Gastrocnemius medialis (tissue), 4 donors: ENCODE measurements at regions of chr15 and their contacts with region 1.

Region 1: GRCh38 chr15:67080900-67081431 is 15.6 kb downstream of the SMAD3 start:
- DNase-seq: peak; percentile 92 to 94
- ATAC-seq: peak; percentile 73 to 82
- H3K4me3 ChIP-seq: peak overlapping the region in 2 of 4 donors; percentile 8 to 9
- H3K27ac ChIP-seq: peak overlapping the region; percentile 87 to 98 (median 94)
- H3K4me1 ChIP-seq: peaks cover 93% of the 10 kb centered on the region in 2 donors
- H3K27me3 ChIP-seq: no peaks in the 10 kb centered on the region
- CTCF ChIP-seq: peak in 4 of 5 experiments; percentile 17 to 37 (median 22)
- POLR2A ChIP-seq: peak; percentile 52 to 63

Region 2: DNA sequence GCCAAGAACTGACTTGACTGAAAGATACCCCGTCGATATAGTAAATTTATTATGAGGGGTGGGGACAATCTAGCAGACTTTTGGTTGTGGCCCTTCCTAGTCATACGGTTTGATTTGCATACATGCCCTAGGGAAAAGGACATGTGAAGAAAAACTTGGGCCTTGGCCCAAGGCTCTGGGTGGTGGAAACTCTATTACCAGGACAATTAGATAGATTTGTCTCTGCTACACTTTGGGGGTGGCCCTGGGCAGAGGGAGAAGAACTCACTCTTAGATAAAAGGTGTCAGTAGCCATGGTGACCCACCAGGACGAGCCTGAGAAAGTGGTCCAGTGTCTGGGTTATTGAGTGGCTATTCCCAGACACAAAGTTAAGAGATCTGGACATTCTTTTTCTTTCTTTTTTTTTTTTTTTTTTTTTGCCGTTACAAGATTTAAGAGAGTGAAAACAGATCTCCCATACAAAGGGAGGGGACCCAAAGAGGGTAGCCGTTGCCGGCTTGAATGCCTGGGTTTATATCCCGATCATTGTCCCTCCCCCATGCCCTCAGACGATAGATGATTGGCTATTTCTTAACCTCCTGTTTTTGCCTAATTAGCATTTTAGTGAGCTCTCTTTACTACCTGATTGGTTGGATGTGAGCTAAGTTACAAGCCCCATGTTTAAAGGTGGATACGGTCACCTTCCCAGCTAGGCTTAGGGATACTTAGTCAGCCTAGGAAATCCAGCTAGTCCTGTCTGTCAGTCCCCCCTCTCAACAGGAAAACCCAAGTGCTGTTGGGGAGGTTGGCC is 112.0 kb before region 1 on chr15:
- in situ Hi-C with region 1: no loop called
- intact Hi-C with region 1: no loop called
- DNase-seq: no peak
- ATAC-seq: no peak
- H3K4me3 ChIP-seq: no peak overlapping the region
- H3K27ac ChIP-seq: no peak overlapping the region
- H3K4me1 ChIP-seq: no peaks in the 10 kb centered on the region
- H3K27me3 ChIP-seq: no peaks in the 10 kb centered on the region
- CTCF ChIP-seq: no peak
- POLR2A ChIP-seq: no peak

Region 3: DNA sequence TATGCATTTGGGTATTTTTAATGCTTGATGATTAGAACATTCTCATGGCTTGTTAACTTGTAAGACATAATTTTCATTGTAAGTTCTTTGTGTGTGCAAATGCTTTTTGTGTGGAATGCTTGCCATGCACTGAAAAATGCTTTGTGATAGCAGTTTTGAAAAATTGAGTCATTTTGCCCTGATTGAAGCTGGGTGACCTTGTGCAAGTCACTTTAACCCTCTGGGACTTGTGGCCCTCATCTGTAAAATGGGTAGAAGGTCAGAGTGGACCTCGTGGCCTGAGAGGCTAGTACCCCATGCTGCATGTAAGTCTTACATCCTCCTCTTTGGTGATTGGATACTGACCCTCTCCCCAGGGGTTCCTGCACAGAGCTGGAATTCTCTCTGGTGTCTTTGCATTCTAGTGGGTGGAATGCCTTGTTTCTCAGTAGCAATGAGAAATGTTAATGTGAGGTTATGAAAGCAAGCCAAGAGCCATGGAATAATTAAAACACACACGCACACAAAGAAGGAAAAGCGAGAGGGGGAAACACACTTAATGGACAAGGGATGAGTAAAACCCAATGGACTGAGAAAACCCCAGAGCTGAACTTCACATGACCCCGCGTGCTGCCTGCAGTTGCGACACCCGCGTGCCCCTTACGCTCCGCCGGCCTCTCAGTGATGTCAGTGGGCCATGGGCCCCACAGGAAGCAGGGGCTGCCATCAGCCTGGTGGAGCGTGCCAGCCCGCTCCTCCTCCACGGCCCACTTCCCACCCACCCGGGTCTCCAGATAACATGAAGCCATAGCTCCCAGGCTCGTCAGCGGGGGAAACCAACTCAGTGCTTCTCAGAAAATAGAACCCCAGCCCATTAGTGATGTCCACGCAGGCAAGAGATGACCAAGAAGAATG is 28.4 kb after region 1 on chr15:
- in situ Hi-C with region 1: no loop called
- intact Hi-C with region 1: loop called (anchors 2 kb)
- DNase-seq: peak; percentile 54 to 62
- ATAC-seq: no peak
- H3K4me3 ChIP-seq: no peak overlapping the region
- H3K27ac ChIP-seq: peak overlapping the region; percentile 61 to 93 (median 66)
- H3K4me1 ChIP-seq: peaks cover 75 to 87% of the 10 kb centered on the region in 2 donors
- H3K27me3 ChIP-seq: no peaks in the 10 kb centered on the region
- CTCF ChIP-seq: no peak
- POLR2A ChIP-seq: no peak

Region 4: DNA sequence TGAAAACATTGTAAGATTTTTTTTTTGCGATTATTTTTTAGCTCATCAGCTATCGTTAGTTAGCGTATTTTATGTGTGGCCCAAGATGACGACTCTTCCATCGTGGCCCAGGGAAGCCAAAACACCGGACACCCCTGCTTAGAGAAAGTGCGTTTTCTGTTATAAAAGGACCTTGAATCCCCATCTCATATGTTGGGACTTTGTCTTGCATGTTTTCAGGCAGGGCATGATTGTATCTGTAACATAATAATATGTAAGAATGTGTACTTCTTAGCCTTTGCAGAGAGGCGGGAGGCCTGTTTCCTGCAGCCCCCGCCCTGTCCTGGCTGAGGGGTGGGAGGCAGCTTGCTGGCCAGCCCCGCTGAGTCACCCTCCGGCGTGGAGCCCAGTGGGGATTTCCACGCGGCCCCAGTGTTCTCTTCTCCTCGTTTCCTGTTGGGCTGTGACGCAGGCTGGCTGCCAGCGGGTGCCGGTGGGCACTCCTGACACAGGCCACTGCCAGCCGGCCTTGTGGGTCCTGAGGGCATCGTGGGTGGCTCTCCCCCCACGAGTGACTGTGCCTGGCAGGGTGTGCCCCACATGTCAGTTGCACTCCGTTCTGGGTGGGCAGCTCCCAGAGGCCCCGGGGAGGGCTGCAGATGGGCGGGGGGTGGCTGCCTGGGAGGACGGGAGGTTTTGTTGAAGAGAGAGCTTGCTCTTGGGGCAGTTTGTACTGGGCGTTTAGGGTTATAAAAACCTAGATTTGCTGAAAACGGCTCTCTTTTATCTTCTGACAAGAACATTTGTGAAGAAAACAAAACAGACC is 40.1 kb after region 1 on chr15:
- in situ Hi-C with region 1: loop called in 1 of 4 experiments (anchors 10 kb)
- intact Hi-C with region 1: loop called (anchors 1 kb)
- DNase-seq: peak; percentile 79 to 85
- ATAC-seq: peak; percentile 15 to 20
- H3K4me3 ChIP-seq: peak overlapping the region; percentile 7 to 26 (median 24)
- H3K27ac ChIP-seq: peak overlapping the region; percentile 92 to 98 (median 94)
- H3K4me1 ChIP-seq: peaks cover 92% of the 10 kb centered on the region in 2 donors
- H3K27me3 ChIP-seq: no peaks in the 10 kb centered on the region
- CTCF ChIP-seq: no peak
- POLR2A ChIP-seq: peak; percentile 9 to 47

Region 5: DNA sequence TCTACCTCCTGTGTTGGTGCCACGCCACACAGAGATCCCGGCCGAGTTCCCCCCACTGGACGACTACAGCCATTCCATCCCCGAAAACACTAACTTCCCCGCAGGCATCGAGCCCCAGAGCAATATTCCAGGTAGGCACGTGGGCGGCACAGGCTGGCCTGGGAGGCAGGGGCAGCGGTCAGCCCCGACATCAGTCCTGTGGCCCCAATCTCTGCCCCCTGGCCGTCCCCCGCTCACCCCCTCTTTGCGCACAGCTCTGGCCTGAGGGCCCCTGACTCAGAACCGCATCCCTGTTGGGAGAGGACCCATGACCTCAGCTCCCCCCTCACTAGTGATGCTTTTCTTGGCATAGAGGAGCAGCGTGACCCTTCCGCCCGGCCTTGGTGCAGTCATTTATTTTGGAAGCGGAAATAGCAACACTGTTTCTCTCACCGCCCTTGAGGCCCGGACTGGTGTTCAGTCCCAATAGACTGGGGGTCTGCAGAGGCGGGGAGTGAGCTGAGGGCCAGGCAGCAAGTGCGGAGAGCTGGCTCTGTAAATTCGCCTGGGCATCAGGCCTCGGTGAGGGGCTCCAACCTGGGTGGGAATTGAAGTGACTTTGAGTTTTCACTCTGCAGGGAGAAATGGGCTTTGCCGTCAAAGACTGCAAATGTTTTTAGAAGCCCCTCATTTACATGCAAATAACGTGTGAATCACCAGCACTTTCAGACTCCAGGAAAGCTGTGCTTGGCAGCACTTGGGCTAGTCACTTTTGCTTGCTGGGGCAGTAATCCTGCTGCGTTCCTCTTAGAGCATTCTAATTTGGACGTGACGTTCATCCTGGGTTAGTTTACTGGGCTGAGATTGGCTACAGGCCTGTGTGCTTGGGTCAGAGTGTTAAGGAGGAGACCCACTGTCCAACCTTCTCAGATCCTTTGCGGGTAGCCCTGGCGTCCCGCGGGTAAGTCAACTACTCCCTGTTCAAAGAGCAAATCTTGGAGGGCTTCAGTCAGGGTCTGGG is 84.6 kb after region 1 on chr15:
- in situ Hi-C with region 1: no loop called
- intact Hi-C with region 1: loop called (anchors 1 kb)
- DNase-seq: peak in 1 of 2 donors; percentile 43
- ATAC-seq: no peak
- H3K4me3 ChIP-seq: no peak overlapping the region
- H3K27ac ChIP-seq: peak overlapping the region; percentile 85 to 99 (median 95)
- H3K4me1 ChIP-seq: peaks cover 89 to 91% of the 10 kb centered on the region in 2 donors
- H3K27me3 ChIP-seq: no peaks in the 10 kb centered on the region
- CTCF ChIP-seq: no peak
- POLR2A ChIP-seq: no peak

Region 6: GRCh38 chr15:67188551-67189218 is 107.7 kb after region 1 on chr15:
- in situ Hi-C with region 1: loop called in 2 of 4 experiments (anchors 5 to 10 kb)
- intact Hi-C with region 1: loop called (anchors 1 kb)
- DNase-seq: peak in 1 of 2 donors; percentile 62
- ATAC-seq: no peak
- H3K4me3 ChIP-seq: no peak overlapping the region
- H3K27ac ChIP-seq: peak overlapping the region; percentile 91 to 99 (median 96)
- H3K4me1 ChIP-seq: peaks cover 95 to 96% of the 10 kb centered on the region in 2 donors
- H3K27me3 ChIP-seq: no peaks in the 10 kb centered on the region
- CTCF ChIP-seq: no peak
- POLR2A ChIP-seq: no peak

Region 7: DNA sequence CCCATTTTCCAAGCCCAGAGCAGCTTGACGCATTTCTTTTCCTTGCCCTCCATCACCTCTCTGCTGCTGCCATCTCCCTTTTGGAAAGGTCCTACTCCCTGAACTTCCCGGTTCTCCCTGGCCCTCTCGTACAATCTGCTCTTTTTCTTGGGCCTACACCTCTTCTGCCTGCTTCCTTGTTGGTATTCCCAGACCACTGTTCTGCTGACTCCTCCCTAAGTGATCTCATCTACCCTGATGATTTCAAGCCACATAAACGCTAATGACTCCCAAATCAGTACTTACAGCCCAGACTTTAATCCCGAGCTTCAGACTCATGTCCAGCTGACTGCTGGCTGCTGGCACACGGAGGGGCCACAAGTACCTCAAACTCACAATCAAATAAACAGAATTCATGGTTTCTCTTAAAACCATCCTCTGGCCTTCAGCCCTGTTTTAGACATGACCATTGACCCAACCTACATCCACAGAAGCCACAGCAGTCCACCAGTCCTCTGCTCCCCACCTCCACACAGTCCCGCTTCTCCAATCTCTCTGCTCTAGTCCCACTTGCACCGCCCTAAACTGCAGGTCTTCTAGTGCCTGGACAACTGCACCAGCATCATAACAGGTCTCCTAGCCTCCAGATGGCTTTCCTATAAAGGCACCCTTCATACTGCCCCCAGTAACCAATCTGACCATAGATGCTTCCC is 115.9 kb after region 1 on chr15:
- in situ Hi-C with region 1: loop called in 1 of 4 experiments (anchors 10 kb)
- intact Hi-C with region 1: no loop called
- DNase-seq: no peak
- ATAC-seq: no peak
- H3K4me3 ChIP-seq: no peak overlapping the region
- H3K27ac ChIP-seq: peak overlapping the region; percentile 91 to 99 (median 96)
- H3K4me1 ChIP-seq: peaks cover 79 to 85% of the 10 kb centered on the region in 2 donors
- H3K27me3 ChIP-seq: no peaks in the 10 kb centered on the region
- CTCF ChIP-seq: no peak
- POLR2A ChIP-seq: no peak

Region 8: DNA sequence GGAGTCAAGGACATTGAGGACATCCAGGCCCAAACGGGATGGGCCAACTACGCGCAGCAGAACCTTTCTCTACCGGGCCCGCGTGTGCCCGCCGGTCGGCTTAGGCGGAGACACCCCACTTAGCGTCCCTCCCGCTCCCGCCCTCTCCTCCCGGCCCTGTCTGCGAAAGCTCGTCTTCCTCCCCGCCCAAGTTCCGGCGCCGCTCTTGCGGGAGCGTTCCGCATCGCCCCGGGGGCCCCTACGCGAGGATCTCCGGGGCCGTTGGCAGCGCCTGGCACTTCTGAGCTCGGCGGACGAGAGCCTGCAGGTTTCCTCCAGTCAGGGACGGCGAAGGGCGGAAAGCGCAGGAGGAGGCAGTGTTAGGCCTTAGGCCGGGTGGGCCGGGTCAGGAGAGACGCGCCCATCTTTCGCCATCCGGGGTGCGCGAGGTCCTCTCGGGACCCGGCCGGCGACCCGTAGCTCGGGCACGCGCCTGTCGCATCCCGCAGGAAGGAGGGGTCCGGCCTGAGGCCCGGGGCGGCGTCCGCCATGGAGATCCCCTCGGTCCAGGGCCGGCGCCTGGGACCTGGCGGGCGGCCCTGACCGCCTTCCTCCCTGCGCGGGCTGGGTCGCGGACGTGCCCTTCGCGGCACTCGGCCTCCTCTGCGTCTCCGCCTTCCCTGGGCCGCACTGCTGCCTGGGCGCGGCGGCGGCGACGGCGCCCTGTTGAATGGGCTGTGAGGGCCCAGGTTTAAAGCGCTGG is 1196.8 kb after region 1 on chr15 and contains the start of gene FEM1B:
- in situ Hi-C with region 1: no loop called
- intact Hi-C with region 1: loop called (anchors 10 kb)
- DNase-seq: peak; percentile 90 to 92
- ATAC-seq: peak; percentile 60 to 68
- H3K4me3 ChIP-seq: peak within 1 kb of the TSS; percentile 73 to 97 (median 81)
- H3K27ac ChIP-seq: peak within 1 kb of the TSS; percentile 97 to 100 (median 99)
- H3K4me1 ChIP-seq: peaks cover 58 to 76% of the 10 kb centered on the region in 2 donors
- H3K27me3 ChIP-seq: no peaks in the 10 kb centered on the region
- CTCF ChIP-seq: peak in 2 of 5 experiments; percentile 40 to 42
- POLR2A ChIP-seq: peak; percentile 94 to 96
- total RNA-seq, gene FEM1B: 80.8 to 158 (median 124) TPM